ENCODE measurements at regions of chr17 and their contacts with region 1.

Region 1: DNA sequence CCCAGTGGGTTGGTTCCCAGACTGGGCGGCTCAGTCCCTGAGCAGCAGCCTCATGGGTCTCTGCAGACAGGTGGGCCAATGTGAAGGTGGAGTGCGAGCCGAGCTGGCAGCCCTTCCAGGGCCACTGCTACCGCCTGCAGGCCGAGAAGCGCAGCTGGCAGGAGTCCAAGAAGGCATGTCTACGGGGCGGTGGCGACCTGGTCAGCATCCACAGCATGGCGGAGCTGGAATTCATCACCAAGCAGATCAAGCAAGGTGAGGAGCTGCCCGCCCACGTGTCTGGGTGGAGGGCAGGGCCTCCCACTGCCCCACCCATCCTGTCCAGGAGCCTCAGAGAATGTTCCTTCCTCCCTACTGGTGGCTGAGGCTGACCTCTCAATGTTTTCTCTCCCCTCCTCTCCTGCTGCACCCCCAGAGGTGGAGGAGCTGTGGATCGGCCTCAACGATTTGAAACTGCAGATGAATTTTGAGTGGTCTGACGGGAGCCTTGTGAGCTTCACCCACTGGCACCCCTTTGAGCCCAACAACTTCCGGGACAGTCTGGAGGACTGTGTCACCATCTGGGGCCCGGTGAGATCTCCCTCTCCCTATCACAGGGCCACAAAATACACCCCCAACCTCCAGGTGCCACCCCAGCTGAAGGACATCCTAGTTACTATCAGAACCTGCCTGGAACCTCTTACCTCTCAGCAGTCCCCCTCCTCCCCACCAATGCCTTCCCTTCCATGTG is 44.3 kb downstream of the MRC2 start:
- DNase-seq: peak; percentile 57 to 81 (median 72)
- ATAC-seq: peak; percentile 59
- H3K4me3 ChIP-seq: no peak overlapping the region
- H3K27ac ChIP-seq: no peak overlapping the region
- H3K4me1 ChIP-seq: peaks cover 8 to 41% of the 10 kb centered on the region in 2 experiments; a peak in 4 of 5 replicates
- H3K27me3 ChIP-seq: no peaks in the 10 kb centered on the region
- CTCF ChIP-seq: peak in 2 of 3 experiments; percentile 39 to 46; a peak in 3 of 6 replicates
- EP300 ChIP-seq: no peak
- POLR2A ChIP-seq: no peak
- RAD21 ChIP-seq: peak in 1 of 2 experiments; percentile 50; a peak in 2 of 4 replicates

Region 2: DNA sequence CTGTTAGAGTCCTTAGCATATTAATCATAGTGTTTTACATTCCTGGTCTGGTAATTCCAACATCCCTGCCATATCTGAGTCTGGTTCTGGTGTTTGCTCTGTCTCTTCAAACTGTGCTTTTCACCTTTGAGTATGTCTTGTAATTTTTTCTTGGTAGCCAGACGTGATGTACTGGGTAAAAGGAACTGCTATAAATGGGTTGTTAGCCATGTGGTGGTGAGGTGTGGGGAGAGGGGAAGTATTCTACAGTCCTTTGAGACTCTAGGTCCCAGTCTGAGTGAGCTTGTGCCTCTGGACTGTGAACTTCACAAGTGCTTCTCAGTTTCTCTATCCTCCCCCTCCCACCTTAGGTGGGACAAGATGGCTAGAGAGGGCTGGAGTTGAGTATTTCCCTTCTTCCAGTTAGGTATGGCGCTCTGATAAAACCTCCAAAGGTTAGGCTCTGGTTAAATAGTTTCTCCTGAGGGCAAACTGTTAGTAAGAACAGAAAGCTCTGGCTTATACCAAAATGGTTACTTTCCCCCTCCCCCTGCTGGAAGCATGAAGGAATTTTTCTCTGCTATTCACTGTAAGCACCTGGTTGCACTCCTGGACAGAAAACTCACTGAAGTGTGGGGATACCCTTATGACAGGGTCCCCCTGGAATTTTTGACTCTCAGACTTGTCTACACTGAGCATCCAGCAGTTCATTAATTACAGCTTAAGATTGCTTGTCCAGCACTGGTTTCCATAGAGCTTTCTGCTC is 48.5 kb after region 1 on chr17:
- CTCF ChIA-PET with region 1: no interaction called
- POLR2A ChIA-PET with region 1: no interaction called
- in situ Hi-C with region 1: no loop called
- intact Hi-C with region 1: loop called (anchors 1 kb)
- DNase-seq: peak; percentile 24 to 46 (median 43)
- ATAC-seq: peak; percentile 70
- H3K4me3 ChIP-seq: no peak overlapping the region
- H3K27ac ChIP-seq: no peak overlapping the region
- H3K4me1 ChIP-seq: peaks cover 0 to 9% of the 10 kb centered on the region in 2 experiments; a peak in 4 of 5 replicates
- H3K27me3 ChIP-seq: peaks cover 13 to 49% of the 10 kb centered on the region in 2 experiments; a peak in 3 of 5 replicates
- CTCF ChIP-seq: peak; percentile 43 to 54 (median 48); a peak in 4 of 6 replicates
- EP300 ChIP-seq: no peak
- POLR2A ChIP-seq: no peak
- RAD21 ChIP-seq: peak in 1 of 2 experiments; percentile 47; a peak in 2 of 4 replicates

Region 3: DNA sequence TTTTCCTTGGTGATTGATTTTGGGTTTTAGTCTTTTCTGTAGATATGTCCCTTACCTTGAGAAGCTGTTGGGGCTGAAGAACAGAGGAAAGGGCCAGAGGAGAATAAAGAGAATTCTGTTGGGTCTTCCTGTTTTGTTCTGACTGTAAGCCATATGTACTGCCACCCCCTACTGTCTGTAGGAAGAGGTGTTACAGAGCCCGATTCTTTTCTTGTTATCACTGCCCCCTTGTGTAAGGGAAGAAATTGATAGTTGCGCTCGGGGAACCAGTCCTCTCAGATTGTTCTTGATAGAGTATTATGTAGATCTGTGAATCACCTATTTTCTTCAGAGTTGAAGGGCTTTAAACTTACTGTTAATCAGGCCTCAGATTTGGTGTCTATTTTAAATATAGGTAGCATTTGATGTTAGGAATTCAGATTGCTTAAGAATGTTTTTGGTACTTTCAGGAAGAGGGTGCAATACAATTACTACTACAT is 296.7 kb after region 1 on chr17:
- CTCF ChIA-PET with region 1: interaction called, 14 read pairs
- POLR2A ChIA-PET with region 1: no interaction called
- in situ Hi-C with region 1: no loop called
- intact Hi-C with region 1: loop called (anchors 1 kb)
- DNase-seq: peak; percentile 80 to 88 (median 82)
- ATAC-seq: peak; percentile 87
- H3K4me3 ChIP-seq: no peak overlapping the region
- H3K27ac ChIP-seq: no peak overlapping the region
- H3K4me1 ChIP-seq: peaks cover 12 to 16% of the 10 kb centered on the region in 2 experiments; a peak in 4 of 5 replicates
- H3K27me3 ChIP-seq: no peaks in the 10 kb centered on the region; a peak in 1 of 5 replicates
- CTCF ChIP-seq: peak; percentile 88 to 99 (median 99)
- EP300 ChIP-seq: no peak; the same call in 1 of the 2 replicates
- POLR2A ChIP-seq: no peak
- RAD21 ChIP-seq: peak; percentile 95 to 97